Activated CD4-positive, alpha-beta memory T cell treated with anti-CD3 and anti-CD28 coated beads for 36 hours (primary cell): ENCODE measurements at regions of chr20 and their contacts with region 1.

Region 1: DNA sequence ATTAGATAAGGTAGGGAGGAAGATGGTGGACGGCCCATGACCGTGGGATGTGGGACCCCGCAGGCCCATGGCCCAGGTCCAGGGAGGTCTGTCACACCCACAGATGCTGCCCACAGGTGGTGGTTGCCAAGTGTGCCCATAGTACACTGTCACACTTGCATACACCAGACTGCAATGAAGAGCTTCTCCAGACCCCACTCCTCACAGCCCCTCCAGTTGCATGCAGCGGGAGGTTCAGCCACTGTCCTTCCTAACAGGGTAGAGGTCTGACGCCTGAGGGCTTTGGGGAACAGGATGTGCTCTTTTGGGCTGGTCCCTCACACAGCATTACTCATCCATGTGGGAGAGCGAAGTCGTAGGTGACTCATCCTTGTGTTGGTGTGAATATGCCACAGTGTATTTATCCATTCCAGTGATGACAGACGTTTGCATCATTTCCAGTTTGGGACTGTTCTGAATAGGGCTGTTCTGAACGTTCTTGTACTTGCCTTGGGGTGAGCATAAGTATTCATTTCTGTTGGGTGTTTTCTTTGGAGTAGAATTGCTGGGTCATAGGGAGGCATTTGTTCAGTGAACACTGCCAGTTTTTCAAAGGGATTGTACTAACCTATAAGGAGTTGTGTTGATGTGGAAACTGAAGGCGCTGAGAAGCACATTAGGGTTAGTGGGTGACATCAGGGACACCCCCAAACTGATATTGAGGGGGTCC is 10.1 kb upstream of the PYGB start:
- DNase-seq: peak; percentile 82
- H3K4me3 Mint-ChIP-seq: peak overlapping the region; percentile 36
- H3K27ac Mint-ChIP-seq: peak overlapping the region; percentile 91
- H3K4me1 Mint-ChIP-seq: peaks cover 29% of the 10 kb centered on the region
- H3K27me3 Mint-ChIP-seq: peaks cover 19% of the 10 kb centered on the region

Region 2: GRCh38 chr20:24948939-24949679 is 288.7 kb before region 1 on chr20 and contains the start of gene CST7:
- CTCF ChIA-PET with region 1: no interaction called
- POLR2A ChIA-PET with region 1: no interaction called
- intact Hi-C with region 1: loop called (anchors 5 kb)
- DNase-seq: peak; percentile 93
- H3K4me3 Mint-ChIP-seq: peak within 1 kb of the TSS; percentile 83
- H3K27ac Mint-ChIP-seq: peak within 1 kb of the TSS; percentile 96
- H3K4me1 Mint-ChIP-seq: peaks cover 50% of the 10 kb centered on the region
- H3K27me3 Mint-ChIP-seq: no peaks in the 10 kb centered on the region
- total RNA-seq, gene CST7: 81.8 to 83.1 TPM

Region 3: DNA sequence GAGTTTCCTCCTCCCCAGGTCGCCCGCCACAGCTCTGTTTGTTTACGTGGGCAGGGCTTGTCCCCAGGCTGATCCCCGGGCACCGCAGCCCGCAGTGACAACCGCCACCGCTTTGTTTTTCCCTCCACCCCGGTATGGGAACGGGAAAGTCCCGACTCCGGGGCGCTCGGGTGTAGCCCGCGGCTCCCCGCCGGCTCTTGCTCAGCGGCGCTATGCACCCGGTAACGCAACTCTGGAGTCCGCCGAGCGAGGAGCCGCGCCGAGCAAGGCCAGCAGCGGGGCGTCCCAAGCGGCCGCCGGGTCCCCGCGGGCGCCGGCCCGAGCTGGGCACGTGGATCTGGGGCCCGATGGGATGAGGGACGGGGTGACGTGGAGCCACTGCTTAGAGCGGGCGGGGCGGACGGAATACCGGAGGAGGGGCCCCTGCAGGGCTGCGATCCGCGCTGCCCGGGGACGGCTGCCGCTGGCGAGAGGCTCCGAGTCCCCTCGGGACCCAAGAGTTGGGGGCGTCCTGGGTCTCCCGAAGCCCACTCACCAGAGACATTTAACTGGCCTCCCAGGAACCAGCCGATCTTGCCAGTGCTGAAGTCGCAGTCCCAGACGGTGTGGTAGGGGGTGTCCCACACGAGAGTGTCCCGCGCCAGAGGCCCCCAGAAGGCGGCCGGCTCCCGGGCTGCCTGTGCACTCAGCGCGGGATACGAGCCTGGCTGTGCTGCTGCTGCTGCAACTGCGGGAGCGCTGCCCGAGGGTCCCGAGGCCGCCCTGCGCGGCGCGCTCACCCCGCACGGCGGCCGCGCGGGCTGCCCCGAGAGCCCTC is 180.3 kb before region 1 on chr20:
- CTCF ChIA-PET with region 1: no interaction called
- POLR2A ChIA-PET with region 1: no interaction called
- intact Hi-C with region 1: loop called (anchors 5 kb)
- DNase-seq: peak; percentile 87
- H3K4me3 Mint-ChIP-seq: peak overlapping the region; percentile 79
- H3K27ac Mint-ChIP-seq: peak overlapping the region; percentile 79
- H3K4me1 Mint-ChIP-seq: peaks cover 47% of the 10 kb centered on the region
- H3K27me3 Mint-ChIP-seq: no peaks in the 10 kb centered on the region

Region 4: GRCh38 chr20:25090492-25091429 is 147.0 kb before region 1 on chr20:
- CTCF ChIA-PET with region 1: no interaction called
- POLR2A ChIA-PET with region 1: no interaction called
- intact Hi-C with region 1: loop called (anchors 5 kb)
- DNase-seq: peak; percentile 84
- H3K4me3 Mint-ChIP-seq: peak overlapping the region; percentile 20
- H3K27ac Mint-ChIP-seq: peak overlapping the region; percentile 31
- H3K4me1 Mint-ChIP-seq: peaks cover 26% of the 10 kb centered on the region
- H3K27me3 Mint-ChIP-seq: peaks cover 5% of the 10 kb centered on the region

Region 5: GRCh38 chr20:25223179-25223661 is 14.5 kb before region 1 on chr20:
- CTCF ChIA-PET with region 1: interaction called, 3 read pairs
- POLR2A ChIA-PET with region 1: interaction called, 4 read pairs
- intact Hi-C with region 1: loop called (anchors 1 kb)
- DNase-seq: peak; percentile 79
- H3K4me3 Mint-ChIP-seq: no peak overlapping the region
- H3K27ac Mint-ChIP-seq: peak overlapping the region; percentile 45
- H3K4me1 Mint-ChIP-seq: peaks cover 6% of the 10 kb centered on the region
- H3K27me3 Mint-ChIP-seq: no peaks in the 10 kb centered on the region

Region 6: DNA sequence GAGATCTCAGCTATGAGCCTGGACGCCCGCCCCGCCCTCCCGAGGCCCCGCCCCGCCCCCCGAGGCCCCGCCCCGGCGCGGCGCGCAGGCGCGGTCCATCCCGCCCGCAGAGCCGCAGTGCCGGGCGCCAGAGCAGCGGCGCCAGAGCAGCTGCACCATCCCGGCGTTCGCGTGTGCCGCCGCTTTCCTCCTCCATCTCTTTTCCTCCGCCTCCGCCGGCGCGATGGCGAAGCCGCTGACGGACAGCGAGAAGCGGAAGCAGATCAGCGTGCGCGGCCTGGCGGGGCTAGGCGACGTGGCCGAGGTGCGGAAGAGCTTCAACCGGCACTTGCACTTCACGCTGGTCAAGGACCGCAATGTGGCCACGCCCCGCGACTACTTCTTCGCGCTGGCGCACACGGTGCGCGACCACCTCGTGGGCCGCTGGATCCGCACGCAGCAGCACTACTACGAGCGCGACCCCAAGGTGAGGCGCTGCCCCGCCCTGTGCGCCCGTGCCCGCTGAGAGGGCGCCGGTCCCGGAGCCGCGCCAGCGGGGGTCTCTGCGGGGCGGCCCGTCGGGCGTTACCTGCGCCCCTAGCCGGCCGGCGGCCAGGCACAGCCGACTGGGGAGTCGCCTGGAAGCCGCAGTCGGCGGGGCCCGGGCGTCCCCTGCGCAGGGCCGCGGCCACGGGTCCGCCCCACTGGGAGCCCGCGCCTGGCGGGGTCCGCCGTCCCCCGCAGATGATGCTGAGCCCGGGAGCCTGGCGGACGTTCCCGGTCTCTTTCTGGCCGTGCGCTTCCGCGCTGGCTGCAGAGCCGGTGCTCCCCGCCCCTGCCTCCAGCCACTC is 10.4 kb after region 1 on chr20 and contains the start of gene PYGB:
- CTCF ChIA-PET with region 1: no interaction called
- POLR2A ChIA-PET with region 1: interaction called, 18 read pairs
- intact Hi-C with region 1: loop called (anchors 1 kb)
- DNase-seq: peak; percentile 81
- H3K4me3 Mint-ChIP-seq: peak within 1 kb of the TSS; percentile 91
- H3K27ac Mint-ChIP-seq: peak within 1 kb of the TSS; percentile 88
- H3K4me1 Mint-ChIP-seq: peaks cover 50% of the 10 kb centered on the region
- H3K27me3 Mint-ChIP-seq: no peaks in the 10 kb centered on the region
- total RNA-seq, gene PYGB: 23.4 to 24.0 TPM

Region 7: DNA sequence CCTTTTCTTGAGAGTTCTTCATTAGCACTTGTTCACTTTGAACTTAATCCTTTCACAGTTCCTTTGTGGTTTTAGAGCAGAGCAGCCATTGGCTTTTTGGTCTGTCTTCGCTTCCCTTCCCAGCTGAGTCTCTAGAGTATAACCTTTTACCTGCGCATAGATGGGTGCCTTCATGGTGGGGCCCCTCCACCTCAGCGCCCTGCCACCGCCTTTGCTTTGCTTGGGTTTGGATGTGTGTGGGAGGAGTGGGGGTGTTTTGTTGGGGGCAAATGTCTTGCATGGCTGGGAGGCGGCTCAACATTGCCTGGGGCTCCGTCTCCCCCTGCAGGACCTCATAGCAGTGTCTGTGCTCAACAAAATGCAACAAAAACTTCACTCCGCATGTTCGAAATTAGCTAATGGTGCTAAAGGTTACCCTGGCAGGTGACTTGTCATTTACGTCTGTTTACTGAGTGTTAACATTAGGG is 22.1 kb after region 1 on chr20:
- CTCF ChIA-PET with region 1: no interaction called
- POLR2A ChIA-PET with region 1: no interaction called
- intact Hi-C with region 1: no loop called
- DNase-seq: no peak
- H3K4me3 Mint-ChIP-seq: no peak overlapping the region
- H3K27ac Mint-ChIP-seq: no peak overlapping the region
- H3K4me1 Mint-ChIP-seq: no peaks in the 10 kb centered on the region
- H3K27me3 Mint-ChIP-seq: no peaks in the 10 kb centered on the region

Region 8: GRCh38 chr20:25310268-25310920 is 72.6 kb after region 1 on chr20:
- CTCF ChIA-PET with region 1: no interaction called
- POLR2A ChIA-PET with region 1: no interaction called
- intact Hi-C with region 1: loop called (anchors 5 kb)
- DNase-seq: peak; percentile 79
- H3K4me3 Mint-ChIP-seq: peak overlapping the region; percentile 61
- H3K27ac Mint-ChIP-seq: peak overlapping the region; percentile 89
- H3K4me1 Mint-ChIP-seq: peaks cover 31% of the 10 kb centered on the region
- H3K27me3 Mint-ChIP-seq: no peaks in the 10 kb centered on the region

Region 9: DNA sequence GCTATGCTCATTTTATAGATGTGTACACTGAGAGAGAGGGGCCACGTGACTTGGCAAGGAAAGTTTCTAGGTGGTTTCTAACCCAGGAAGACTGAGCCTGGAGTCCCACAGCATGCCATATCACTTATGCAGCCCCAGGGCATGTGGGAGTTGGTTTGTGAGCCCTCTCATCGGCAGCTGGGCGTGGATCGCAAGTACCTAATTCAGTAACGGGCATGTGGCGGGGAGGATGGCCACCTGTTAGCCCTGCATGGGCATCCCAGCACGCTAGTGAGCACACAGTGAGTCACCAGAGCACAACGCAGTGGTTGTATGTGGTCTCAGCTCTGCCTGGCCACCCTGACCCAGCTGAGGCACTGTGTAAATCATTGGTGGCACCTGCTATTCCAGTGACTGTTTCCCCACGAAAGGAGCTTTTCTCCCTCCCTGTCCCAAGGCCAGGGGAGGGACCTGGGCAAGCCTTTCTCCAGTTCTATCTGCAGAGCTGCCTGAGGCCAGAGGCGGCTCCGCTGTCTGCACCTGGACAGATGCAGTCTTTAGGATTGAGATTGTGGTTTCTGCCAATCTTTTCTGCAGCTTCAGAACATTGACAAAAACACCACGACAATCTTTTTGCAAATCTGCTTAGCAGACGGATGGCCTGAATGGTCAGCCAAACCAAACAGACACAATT is 259.3 kb after region 1 on chr20:
- CTCF ChIA-PET with region 1: no interaction called
- POLR2A ChIA-PET with region 1: no interaction called
- intact Hi-C with region 1: no loop called
- DNase-seq: no peak
- H3K4me3 Mint-ChIP-seq: no peak overlapping the region
- H3K27ac Mint-ChIP-seq: no peak overlapping the region
- H3K4me1 Mint-ChIP-seq: no peaks in the 10 kb centered on the region
- H3K27me3 Mint-ChIP-seq: no peaks in the 10 kb centered on the region